Colonic mucosa (tissue), 4 donors: ENCODE measurements at regions of chr6 and their contacts with region 1.

Region 1: GRCh38 chr6:13624871-13625288 is 9.7 kb downstream of the NOL7 start:
- DNase-seq: no peak
- H3K4me3 ChIP-seq: no peak overlapping the region
- H3K27ac ChIP-seq: no peak overlapping the region
- H3K4me1 ChIP-seq: no peaks in the 10 kb centered on the region
- H3K27me3 ChIP-seq: no peaks in the 10 kb centered on the region
- CTCF ChIP-seq: peak; percentile 44

Region 2: GRCh38 chr6:13681305-13682061 is 56.6 kb after region 1 on chr6:
- intact Hi-C with region 1: loop called (anchors 10 kb)
- DNase-seq: no peak
- H3K4me3 ChIP-seq: no peak overlapping the region
- H3K27ac ChIP-seq: no peak overlapping the region
- H3K4me1 ChIP-seq: no peaks in the 10 kb centered on the region
- H3K27me3 ChIP-seq: no peaks in the 10 kb centered on the region
- CTCF ChIP-seq: no peak

Region 3: DNA sequence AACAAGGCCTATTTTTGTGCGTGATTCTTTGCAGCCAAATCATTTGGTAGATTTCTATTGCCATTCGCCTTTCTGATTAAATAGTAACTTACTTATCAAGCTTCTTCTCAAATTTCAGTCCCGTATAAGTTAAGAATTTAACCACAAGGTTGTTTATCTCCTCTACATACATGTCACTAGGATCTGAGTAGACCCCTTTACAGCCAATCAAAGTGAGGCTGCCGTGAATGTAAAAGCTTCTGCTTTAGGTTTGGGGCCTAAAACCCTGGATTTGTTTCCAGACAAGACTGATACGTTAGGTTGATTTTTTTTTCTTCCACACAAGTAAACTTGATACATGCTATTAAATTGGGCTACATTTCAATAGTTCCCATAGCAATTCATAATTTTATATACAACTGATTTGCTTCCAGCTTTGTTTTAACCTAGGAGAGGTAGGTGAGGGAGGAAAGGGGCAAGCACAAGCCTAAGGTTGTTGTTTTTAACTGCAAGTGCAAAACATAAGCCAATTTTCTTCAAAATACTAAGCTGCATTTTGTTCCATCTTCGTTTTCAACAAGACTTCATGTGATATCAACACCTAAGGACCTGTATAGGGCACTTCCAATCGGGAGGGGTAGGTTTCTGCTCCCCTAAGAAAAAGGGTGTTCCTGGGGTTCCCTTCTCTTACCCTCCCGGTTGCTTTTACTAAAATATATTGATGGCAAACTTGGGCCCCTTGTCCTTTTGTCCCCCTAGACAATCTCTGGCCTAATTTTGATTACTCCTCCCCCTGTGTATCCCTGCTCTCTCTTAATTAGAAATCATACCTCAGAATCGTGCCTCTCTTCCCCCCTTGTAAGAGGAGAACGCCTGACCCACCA is 85.0 kb after region 1 on chr6:
- intact Hi-C with region 1: loop called (anchors 5 kb)
- DNase-seq: peak; percentile 43
- H3K4me3 ChIP-seq: peak overlapping the region; percentile 87
- H3K27ac ChIP-seq: peak overlapping the region; percentile 92
- H3K4me1 ChIP-seq: peaks cover 6% of the 10 kb centered on the region
- H3K27me3 ChIP-seq: no peaks in the 10 kb centered on the region
- CTCF ChIP-seq: no peak

Region 4: GRCh38 chr6:13814176-13814937 is 189.5 kb after region 1 on chr6 and contains the start of gene MCUR1:
- intact Hi-C with region 1: no loop called
- DNase-seq: peak; percentile 88
- H3K4me3 ChIP-seq: peak within 1 kb of the TSS; percentile 84
- H3K27ac ChIP-seq: peak within 1 kb of the TSS; percentile 99
- H3K4me1 ChIP-seq: peaks cover 14% of the 10 kb centered on the region
- H3K27me3 ChIP-seq: no peaks in the 10 kb centered on the region
- CTCF ChIP-seq: no peak
- total RNA-seq, gene MCUR1: 32.1 to 32.9 TPM